ENCODE measurements at regions of chr4 and their contacts with region 1.

Region 1: DNA sequence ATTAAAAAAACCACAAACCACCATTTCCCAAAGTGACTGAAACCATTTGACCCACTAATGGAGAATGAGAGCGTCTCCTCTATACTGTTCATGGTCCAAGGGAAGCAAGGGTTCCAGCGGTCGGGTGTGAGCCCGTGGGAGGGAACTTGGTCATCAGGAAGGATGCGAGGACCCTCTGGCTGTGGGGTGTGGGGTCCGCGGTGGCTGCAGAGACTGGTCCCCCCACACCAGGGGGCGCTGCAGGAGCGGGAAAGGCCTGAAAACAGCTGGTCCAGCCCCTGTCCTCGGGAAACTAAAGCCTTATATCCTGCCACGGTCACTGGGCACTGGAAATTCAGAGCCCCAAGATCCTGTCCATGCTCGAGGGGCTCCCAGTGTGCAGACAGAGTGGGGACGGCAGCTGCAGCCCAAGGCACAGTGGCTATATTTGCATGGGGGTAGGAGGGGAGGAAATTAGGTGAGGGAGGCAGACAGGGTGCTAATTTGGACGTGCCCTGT is 4.3 kb downstream of the BLOC1S4 start:
- DNase-seq: peak; percentile 84 to 92
- H3K4me3 ChIP-seq: no peak overlapping the region
- H3K27ac ChIP-seq: peak overlapping the region in 1 of 5 donors; percentile 12
- H3K4me1 ChIP-seq: peaks cover 21 to 37% (median 29%) of the 10 kb centered on the region in 4 donors
- H3K27me3 ChIP-seq: no peaks in the 10 kb centered on the region
- CTCF ChIP-seq: peak in 5 of 7 experiments; percentile 81 to 98 (median 93)
- EP300 ChIP-seq: no peak
- POLR2A ChIP-seq: no peak

Region 2: GRCh38 chr4:6783053-6783981 is 63.1 kb after region 1 on chr4:
- intact Hi-C with region 1: loop called (anchors 10 kb)
- DNase-seq: peak; percentile 93 to 97
- H3K4me3 ChIP-seq: peak overlapping the region; percentile 94 to 100 (median 98)
- H3K27ac ChIP-seq: peak overlapping the region; percentile 99 to 100 (median 100)
- H3K4me1 ChIP-seq: peaks cover 26 to 57% (median 40%) of the 10 kb centered on the region in 4 donors
- H3K27me3 ChIP-seq: no peaks in the 10 kb centered on the region
- CTCF ChIP-seq: no peak
- EP300 ChIP-seq: no peak
- POLR2A ChIP-seq: peak in 1 of 4 donors; percentile 74

Region 3: GRCh38 chr4:6806924-6807636 is 86.8 kb after region 1 on chr4:
- intact Hi-C with region 1: no loop called
- DNase-seq: no peak
- H3K4me3 ChIP-seq: no peak overlapping the region
- H3K27ac ChIP-seq: peak overlapping the region in 3 of 5 donors; percentile 29 to 72 (median 68)
- H3K4me1 ChIP-seq: peaks cover 10 to 82% (median 52%) of the 10 kb centered on the region in 4 donors
- H3K27me3 ChIP-seq: no peaks in the 10 kb centered on the region
- CTCF ChIP-seq: no peak
- EP300 ChIP-seq: no peak
- POLR2A ChIP-seq: no peak

Region 4: DNA sequence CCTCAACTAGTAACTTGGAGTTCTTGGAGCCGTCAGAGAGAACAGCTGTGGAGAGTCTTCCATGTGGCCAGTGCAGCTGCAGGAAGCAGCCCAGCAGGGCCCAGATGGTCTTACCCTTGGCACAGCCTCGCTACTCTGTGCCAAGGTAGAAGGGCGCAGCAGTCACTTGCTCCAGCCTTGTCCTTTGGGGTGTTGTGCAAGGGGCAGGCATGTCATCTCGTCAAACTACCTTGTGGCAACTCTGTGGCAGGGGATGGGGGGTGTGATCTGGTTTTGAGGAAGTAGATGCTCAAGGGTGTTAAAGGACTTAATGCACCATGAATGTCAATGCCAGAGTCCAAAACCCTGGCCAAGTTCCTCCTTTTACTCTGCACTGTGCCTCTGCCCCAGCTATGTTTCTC is 155.2 kb after region 1 on chr4:
- intact Hi-C with region 1: loop called (anchors 5 kb)
- DNase-seq: peak in 1 of 2 donors; percentile 36
- H3K4me3 ChIP-seq: no peak overlapping the region
- H3K27ac ChIP-seq: no peak overlapping the region
- H3K4me1 ChIP-seq: peaks cover 0 to 16% (median 3%) of the 10 kb centered on the region in 4 donors
- H3K27me3 ChIP-seq: no peaks in the 10 kb centered on the region
- CTCF ChIP-seq: no peak
- EP300 ChIP-seq: no peak
- POLR2A ChIP-seq: no peak

Measured in stomach (tissue), 19 donors.